HEK293T (cell line): ENCODE measurements at regions of chr4 and their contacts with region 1.

Region 1: GRCh38 chr4:156294577-156294976 is 340.9 kb upstream of the CTSO start:
- DNase-seq: peak; percentile 31

Region 2: GRCh38 chr4:156169011-156169410 is 125.6 kb before region 1 on chr4:
- CTCF ChIA-PET with region 1: interaction called, 12 read pairs
- POLR2A ChIA-PET with region 1: no interaction called
- DNase-seq: peak; percentile 30

Region 3: DNA sequence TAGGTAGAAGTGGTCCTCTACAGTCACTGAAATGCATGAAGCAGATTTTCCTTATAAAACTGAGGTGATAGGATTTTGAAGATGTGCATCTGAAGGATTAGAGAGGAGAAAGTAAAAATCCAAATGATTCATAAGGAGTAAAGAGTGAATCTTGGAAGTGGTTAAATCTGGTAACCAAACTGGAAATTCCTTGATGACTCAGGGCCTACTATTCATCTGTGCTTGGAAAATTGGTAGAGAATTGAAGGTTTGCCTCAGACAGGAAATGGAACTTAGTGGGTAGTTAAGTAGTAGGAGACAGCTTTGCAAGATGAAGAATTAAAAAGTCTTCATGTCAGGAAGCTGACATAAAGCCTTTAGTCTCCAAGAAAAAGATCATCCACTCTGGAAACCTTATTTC is 28.0 kb after region 1 on chr4:
- CTCF ChIA-PET with region 1: no interaction called
- POLR2A ChIA-PET with region 1: no interaction called
- DNase-seq: no peak